ENCODE measurements at regions of chr13 and their contacts with region 1.

Region 1: DNA sequence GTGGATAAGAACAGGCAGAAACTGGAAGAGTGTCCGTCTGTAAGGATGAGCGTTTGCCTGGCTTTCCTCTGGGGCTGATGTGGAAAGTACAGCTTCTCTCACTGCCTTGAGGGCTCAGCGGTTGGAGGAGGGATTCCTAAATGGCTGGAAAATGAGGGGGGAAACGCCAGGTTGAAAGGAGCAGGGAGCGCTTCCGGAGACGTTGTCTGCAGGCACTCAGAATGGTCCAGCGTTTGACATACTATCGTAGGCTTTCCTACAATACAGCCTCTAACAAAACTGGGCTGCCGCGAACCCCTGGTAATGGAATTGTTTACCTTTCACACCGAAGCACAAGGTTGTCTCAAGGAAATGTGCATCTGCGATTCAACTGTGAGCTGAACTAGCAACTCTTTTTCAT is 39.9 kb downstream of the MRPL57 start:
- DNase-seq: no peak
- H3K4me3 Mint-ChIP-seq: no peak overlapping the region
- H3K27ac Mint-ChIP-seq: no peak overlapping the region
- H3K4me1 Mint-ChIP-seq: peaks cover 20% of the 10 kb centered on the region
- H3K27me3 Mint-ChIP-seq: peaks cover 34% of the 10 kb centered on the region

Region 2: DNA sequence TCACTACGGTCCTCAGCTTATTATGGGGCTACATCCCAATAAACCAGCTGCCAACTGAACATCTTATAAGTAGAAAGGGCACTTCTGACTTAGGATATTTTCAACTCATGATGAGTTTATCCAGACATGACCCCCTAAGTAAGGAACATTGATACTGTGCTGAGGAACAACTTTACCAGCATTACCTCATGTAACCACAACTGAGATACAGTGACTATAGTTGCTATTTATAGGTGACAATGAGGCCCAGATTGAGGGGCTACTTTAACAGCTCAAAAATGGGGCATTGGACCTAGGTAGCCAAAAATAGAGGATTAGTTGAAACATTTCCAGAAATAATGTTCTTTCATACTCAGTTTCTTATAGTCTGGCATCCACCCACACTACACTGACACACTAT is 66.8 kb before region 1 on chr13:
- intact Hi-C with region 1: no loop called
- DNase-seq: no peak
- H3K4me3 Mint-ChIP-seq: no peak overlapping the region
- H3K27ac Mint-ChIP-seq: no peak overlapping the region
- H3K4me1 Mint-ChIP-seq: no peaks in the 10 kb centered on the region
- H3K27me3 Mint-ChIP-seq: no peaks in the 10 kb centered on the region

Region 3: DNA sequence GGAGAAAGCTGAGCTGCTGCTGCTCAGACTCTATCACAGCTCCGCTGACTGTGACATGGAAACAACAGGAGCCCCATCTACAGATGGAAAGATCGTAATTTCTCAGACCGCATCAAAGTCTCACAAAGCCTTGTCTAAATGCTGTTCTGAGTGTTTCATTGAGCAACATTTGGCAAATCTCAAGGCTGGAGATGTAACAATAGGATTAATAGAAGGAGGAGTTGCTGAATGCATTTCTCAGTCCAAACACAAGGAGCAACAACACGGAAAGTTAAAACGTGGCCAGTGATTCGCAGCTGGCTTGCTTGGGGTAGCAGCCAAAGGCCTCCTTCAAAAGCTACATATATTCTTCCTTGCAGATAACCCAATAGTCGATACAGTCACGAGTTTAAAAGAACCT is 15.9 kb after region 1 on chr13:
- intact Hi-C with region 1: loop called (anchors 2 kb)
- DNase-seq: no peak
- H3K4me3 Mint-ChIP-seq: peak overlapping the region; percentile 19
- H3K27ac Mint-ChIP-seq: peak overlapping the region; percentile 35
- H3K4me1 Mint-ChIP-seq: peaks cover 26% of the 10 kb centered on the region
- H3K27me3 Mint-ChIP-seq: peaks cover 6% of the 10 kb centered on the region